ENCODE measurements at regions of chr10 and their contacts with region 1.

Region 1: GRCh38 chr10:100229819-100230422 is 525 bp upstream of the CHUK start:
- DNase-seq: no peak
- H3K4me3 ChIP-seq: peak overlapping the region; percentile 53 to 82 (median 77)
- H3K27ac ChIP-seq: peak overlapping the region; percentile 71
- H3K4me1 ChIP-seq: peaks cover 4% of the 10 kb centered on the region
- H3K27me3 ChIP-seq: no peaks in the 10 kb centered on the region
- CTCF ChIP-seq: no peak

Region 2: GRCh38 chr10:99430451-99431189 is 799.3 kb before region 1 on chr10 and contains the start of gene GOT1:
- CTCF ChIA-PET with region 1: no interaction called
- dilution Hi-C with region 1: no loop called
- in situ Hi-C with region 1: no loop called
- intact Hi-C with region 1: no loop called
- DNase-seq: peak; percentile 100
- H3K4me3 ChIP-seq: peak within 1 kb of the TSS; percentile 82 to 97 (median 90)
- H3K27ac ChIP-seq: peak within 1 kb of the TSS; percentile 84
- H3K4me1 ChIP-seq: peaks cover 10% of the 10 kb centered on the region
- H3K27me3 ChIP-seq: no peaks in the 10 kb centered on the region
- CTCF ChIP-seq: no peak
- total RNA-seq, gene GOT1: 70.0 to 75.5 TPM

Region 3: DNA sequence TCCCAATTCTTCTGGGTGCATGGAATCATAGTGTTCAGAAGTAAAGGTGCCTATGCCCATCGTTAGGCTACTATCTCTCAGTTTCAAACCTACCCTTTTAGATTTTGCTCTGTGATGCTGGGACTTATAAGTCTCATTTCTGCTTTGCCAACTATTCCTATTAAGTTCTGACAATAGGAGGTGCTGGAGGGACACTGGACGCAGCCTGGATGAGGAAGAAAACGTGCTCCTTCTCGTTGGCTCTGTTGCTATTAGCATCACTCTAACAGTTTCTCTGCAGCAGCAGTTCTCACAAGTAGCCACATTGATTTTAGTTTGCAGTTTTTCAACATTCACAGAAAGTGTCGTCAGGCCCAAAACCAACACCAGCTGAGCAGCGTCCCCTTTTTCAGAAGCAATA is 375.1 kb before region 1 on chr10:
- CTCF ChIA-PET with region 1: no interaction called
- dilution Hi-C with region 1: loop called (anchors 25 kb)
- in situ Hi-C with region 1: no loop called
- intact Hi-C with region 1: no loop called
- DNase-seq: no peak
- H3K4me3 ChIP-seq: no peak overlapping the region
- H3K27ac ChIP-seq: no peak overlapping the region
- H3K4me1 ChIP-seq: no peaks in the 10 kb centered on the region
- H3K27me3 ChIP-seq: no peaks in the 10 kb centered on the region
- CTCF ChIP-seq: peak in 1 of 2 donors; percentile 2

Measured in mammary epithelial cell (primary cell).